Left colon (tissue), 2 donors: ENCODE measurements at regions of chr6 and their contacts with region 1.

Region 1: DNA sequence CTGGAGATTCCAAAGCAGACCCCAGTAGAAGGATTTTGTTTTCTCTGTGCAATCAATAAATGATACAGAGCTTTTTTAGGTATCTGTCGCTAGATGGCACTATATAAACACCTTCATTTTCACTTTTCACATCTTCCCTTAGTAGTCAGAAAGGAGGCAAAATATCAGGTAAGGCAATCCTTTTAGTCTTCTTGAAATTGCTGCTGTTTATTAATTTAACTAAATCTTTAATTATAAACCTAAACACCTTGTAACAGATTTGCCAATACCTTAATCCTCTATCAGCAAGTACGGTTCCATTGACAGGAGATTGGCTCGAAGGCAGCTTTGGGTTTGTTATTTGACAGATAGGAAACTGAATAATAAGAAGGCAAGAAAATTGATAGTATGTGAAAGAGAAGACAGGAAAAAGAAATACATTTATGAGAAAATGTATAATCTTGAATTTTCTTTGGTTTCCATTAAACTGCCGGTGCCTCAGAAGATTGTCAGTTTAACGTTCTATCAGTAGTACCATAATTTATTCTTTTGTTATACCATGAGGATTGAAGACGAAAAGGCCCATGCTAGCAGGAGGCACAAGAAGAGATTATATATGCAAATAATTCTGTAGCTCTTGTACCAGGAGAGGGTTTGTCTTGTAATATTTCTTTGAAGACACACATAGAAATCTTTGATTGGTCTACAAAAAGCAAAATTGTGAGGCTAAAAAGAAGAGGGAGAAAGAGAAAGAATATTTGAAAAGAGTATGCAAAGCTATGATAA is 23.5 kb upstream of the IBTK start:
- DNase-seq: no peak
- ATAC-seq: peak; percentile 36

Region 2: GRCh38 chr6:82646214-82646580 is 375.1 kb after region 1 on chr6:
- intact Hi-C with region 1: no loop called
- DNase-seq: no peak
- ATAC-seq: no peak

Region 3: GRCh38 chr6:83057705-83058321 is 786.8 kb after region 1 on chr6:
- intact Hi-C with region 1: loop called (anchors 5 to 10 kb)
- DNase-seq: peak in 1 of 2 donors; percentile 21
- ATAC-seq: peak; percentile 76

Region 4: GRCh38 chr6:83199863-83200225 is 928.8 kb after region 1 on chr6:
- intact Hi-C with region 1: loop called in 1 of 2 experiments (anchors 5 kb)
- DNase-seq: no peak
- ATAC-seq: peak; percentile 69